Activated CD4-positive, alpha-beta memory T cell treated with anti-CD3 and anti-CD28 coated beads for 36 hours (primary cell): ENCODE measurements at regions of chr10 and their contacts with region 1.

Region 1: GRCh38 chr10:44857363-44858016 is 53.6 kb upstream of the TMEM72 start:
- DNase-seq: peak; percentile 71
- H3K4me3 Mint-ChIP-seq: no peak overlapping the region
- H3K27ac Mint-ChIP-seq: no peak overlapping the region
- H3K4me1 Mint-ChIP-seq: no peaks in the 10 kb centered on the region
- H3K27me3 Mint-ChIP-seq: peaks cover 3% of the 10 kb centered on the region

Region 2: GRCh38 chr10:44217274-44217820 is 640.1 kb before region 1 on chr10:
- CTCF ChIA-PET with region 1: no interaction called
- POLR2A ChIA-PET with region 1: no interaction called
- intact Hi-C with region 1: no loop called
- DNase-seq: no peak
- H3K4me3 Mint-ChIP-seq: no peak overlapping the region
- H3K27ac Mint-ChIP-seq: no peak overlapping the region
- H3K4me1 Mint-ChIP-seq: no peaks in the 10 kb centered on the region
- H3K27me3 Mint-ChIP-seq: peaks cover 6% of the 10 kb centered on the region

Region 3: GRCh38 chr10:44607116-44607515 is 250.4 kb before region 1 on chr10:
- CTCF ChIA-PET with region 1: no interaction called
- POLR2A ChIA-PET with region 1: no interaction called
- intact Hi-C with region 1: no loop called
- DNase-seq: no peak
- H3K4me3 Mint-ChIP-seq: no peak overlapping the region
- H3K27ac Mint-ChIP-seq: no peak overlapping the region
- H3K4me1 Mint-ChIP-seq: no peaks in the 10 kb centered on the region
- H3K27me3 Mint-ChIP-seq: peaks cover 6% of the 10 kb centered on the region

Region 4: GRCh38 chr10:44706745-44707144 is 150.7 kb before region 1 on chr10:
- CTCF ChIA-PET with region 1: no interaction called
- POLR2A ChIA-PET with region 1: no interaction called
- intact Hi-C with region 1: no loop called
- DNase-seq: no peak
- H3K4me3 Mint-ChIP-seq: no peak overlapping the region
- H3K27ac Mint-ChIP-seq: no peak overlapping the region
- H3K4me1 Mint-ChIP-seq: no peaks in the 10 kb centered on the region
- H3K27me3 Mint-ChIP-seq: no peaks in the 10 kb centered on the region

Region 5: GRCh38 chr10:44745920-44746319 is 111.6 kb before region 1 on chr10:
- CTCF ChIA-PET with region 1: no interaction called
- POLR2A ChIA-PET with region 1: no interaction called
- intact Hi-C with region 1: no loop called
- DNase-seq: no peak
- H3K4me3 Mint-ChIP-seq: no peak overlapping the region
- H3K27ac Mint-ChIP-seq: no peak overlapping the region
- H3K4me1 Mint-ChIP-seq: no peaks in the 10 kb centered on the region
- H3K27me3 Mint-ChIP-seq: peaks cover 2% of the 10 kb centered on the region

Region 6: DNA sequence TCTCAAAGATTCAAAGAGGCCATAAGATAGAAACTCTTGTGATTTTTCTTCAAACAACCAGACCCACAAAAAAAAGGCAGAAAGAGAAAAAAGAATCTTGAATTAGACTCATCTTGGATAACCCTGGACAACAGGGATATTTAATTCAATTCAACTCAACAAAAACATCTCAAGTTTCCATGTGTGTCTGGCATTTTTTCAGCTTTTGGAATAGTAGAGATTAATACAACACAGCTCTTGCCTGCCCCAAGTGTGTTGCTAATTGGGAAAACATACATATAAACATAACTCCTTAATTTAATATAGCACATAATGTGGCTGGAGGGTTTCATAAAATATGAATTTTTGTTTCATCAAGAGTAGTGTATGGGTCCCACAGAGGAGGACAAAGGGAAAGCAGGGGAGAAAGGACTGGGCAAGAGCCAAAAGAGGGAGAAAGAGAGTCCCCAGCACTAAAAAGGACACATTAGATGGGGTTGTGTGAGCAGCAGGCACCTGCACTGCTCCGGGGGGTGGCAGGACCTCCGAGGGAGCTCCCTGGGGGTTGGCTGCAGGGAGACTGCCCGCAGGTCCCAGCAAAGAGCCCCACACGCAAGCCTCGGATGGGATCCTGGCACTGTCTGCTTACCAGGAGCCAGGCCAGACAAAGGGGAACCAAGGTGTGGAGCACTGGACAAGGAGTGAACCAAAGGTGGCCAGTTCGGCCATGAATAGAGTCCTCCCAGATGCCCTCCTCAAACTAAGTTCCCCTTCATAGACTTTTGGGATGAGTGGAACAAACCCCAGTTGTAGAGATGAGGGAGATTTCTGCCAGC is 11.9 kb before region 1 on chr10:
- CTCF ChIA-PET with region 1: interaction called, 17 read pairs
- POLR2A ChIA-PET with region 1: no interaction called
- intact Hi-C with region 1: no loop called
- DNase-seq: no peak
- H3K4me3 Mint-ChIP-seq: no peak overlapping the region
- H3K27ac Mint-ChIP-seq: no peak overlapping the region
- H3K4me1 Mint-ChIP-seq: no peaks in the 10 kb centered on the region
- H3K27me3 Mint-ChIP-seq: peaks cover 6% of the 10 kb centered on the region

Region 7: DNA sequence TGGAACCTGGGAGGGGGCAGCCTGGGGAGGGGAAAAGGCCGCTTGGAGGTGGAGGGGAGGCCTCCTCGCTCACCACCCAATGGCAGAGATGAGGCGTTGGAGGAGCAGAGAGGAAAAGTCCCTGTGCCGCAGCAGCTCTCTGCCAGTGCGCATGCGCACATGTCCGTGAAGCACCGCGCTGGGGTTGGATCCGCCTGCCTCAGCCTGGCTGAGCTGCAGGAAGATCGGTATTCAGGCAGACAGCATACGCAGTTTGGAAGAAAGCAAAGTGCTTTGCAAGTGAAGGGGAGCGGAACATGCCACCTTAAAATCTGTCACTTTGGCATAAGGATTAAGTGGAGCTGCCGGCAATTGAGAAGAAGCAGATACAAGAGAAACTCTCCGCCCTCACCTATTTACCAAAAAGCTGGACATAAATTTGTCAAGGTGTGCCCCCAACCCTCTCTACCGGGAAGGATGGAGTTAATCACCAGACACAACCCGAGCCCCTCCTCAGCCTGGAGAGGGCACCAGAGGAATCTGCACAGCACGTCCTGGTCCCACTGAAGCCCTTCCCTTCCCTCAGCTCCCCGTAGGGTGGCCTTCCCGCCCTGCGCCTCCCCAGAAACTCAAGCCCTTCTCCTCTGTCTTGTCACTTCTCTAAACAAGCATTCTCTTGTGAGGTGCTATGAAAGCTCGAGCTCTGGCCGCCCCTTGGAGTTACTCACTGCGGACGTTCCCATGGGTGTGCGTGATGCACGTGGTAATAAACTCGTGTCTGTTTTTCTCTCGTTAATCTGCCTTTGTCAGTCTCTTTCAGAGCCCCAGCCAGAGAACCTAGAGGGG is 21.4 kb after region 1 on chr10:
- CTCF ChIA-PET with region 1: interaction called, 16 read pairs
- POLR2A ChIA-PET with region 1: no interaction called
- intact Hi-C with region 1: no loop called
- DNase-seq: peak; percentile 86
- H3K4me3 Mint-ChIP-seq: peak overlapping the region; percentile 82
- H3K27ac Mint-ChIP-seq: peak overlapping the region; percentile 52
- H3K4me1 Mint-ChIP-seq: peaks cover 10% of the 10 kb centered on the region
- H3K27me3 Mint-ChIP-seq: peaks cover 8% of the 10 kb centered on the region